Transverse colon (tissue), 4 donors: ENCODE measurements at regions of chr15 and their contacts with region 1.

Region 1: DNA sequence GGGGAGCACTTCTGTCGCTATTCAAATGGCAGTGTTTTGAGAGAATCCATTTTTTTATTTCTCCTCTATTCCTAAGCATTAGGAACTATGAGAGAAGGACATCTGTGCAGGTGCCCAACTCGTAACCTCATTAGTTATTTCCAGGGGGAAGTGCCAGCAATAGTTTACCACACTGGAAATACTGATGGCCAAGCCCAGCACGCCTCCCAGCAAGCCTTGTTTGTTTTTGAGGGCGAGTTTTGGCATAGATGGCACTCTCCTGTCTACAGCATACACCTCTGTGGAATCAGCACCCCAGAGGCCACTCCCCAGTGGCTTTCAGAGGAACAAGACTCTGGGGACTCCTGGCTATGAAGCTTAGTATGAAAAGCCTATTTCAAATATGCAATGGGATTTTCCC is 36.6 kb downstream of the FAN1 start:
- DNase-seq: peak; percentile 40
- H3K4me3 ChIP-seq: no peak overlapping the region
- H3K27ac ChIP-seq: no peak overlapping the region
- H3K4me1 ChIP-seq: no peaks in the 10 kb centered on the region
- H3K27me3 ChIP-seq: no peaks in the 10 kb centered on the region
- CTCF ChIP-seq: no peak
- EP300 ChIP-seq: no peak
- POLR2A ChIP-seq: no peak

Region 2: DNA sequence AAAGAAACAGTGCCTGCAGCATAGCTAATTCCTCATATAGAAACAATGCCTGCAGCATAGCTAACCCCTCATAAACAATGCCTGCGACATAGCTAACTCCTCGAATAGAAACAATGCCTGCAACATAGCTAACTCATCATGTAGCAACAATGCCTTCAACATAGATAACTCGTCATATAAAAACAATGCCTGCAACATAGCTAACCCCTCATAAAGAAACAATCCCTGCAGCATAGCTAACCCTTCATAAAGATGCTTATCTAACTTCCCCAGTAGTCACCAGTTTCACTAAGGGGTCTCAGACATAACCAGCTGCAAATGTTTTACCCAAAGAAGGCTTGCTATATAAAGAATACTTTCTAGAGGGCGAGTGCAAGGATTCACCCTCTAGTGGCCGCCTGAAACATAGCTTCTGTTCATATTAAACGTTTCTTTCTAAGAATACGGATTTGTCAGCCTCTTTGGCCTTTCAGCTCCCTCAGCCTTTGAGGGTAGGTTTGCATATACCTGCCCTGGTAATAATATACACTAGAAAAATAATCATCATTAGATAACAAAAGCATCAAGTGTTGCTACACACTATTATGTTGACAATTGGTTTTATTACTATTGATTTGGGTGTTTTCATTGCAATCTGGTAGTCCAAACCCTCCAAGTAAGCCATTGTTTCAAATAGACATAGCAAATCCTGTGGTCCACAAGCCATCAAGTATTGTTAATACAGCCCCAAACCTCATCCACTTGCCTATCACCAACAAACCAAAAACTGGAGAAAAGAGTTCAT is 81.1 kb before region 1 on chr15:
- in situ Hi-C with region 1: no loop called
- intact Hi-C with region 1: no loop called
- DNase-seq: no peak
- H3K4me3 ChIP-seq: no peak overlapping the region
- H3K27ac ChIP-seq: no peak overlapping the region
- H3K4me1 ChIP-seq: no peaks in the 10 kb centered on the region
- H3K27me3 ChIP-seq: no peaks in the 10 kb centered on the region
- CTCF ChIP-seq: peak; percentile 39 to 71 (median 62)
- EP300 ChIP-seq: no peak
- POLR2A ChIP-seq: no peak

Region 3: DNA sequence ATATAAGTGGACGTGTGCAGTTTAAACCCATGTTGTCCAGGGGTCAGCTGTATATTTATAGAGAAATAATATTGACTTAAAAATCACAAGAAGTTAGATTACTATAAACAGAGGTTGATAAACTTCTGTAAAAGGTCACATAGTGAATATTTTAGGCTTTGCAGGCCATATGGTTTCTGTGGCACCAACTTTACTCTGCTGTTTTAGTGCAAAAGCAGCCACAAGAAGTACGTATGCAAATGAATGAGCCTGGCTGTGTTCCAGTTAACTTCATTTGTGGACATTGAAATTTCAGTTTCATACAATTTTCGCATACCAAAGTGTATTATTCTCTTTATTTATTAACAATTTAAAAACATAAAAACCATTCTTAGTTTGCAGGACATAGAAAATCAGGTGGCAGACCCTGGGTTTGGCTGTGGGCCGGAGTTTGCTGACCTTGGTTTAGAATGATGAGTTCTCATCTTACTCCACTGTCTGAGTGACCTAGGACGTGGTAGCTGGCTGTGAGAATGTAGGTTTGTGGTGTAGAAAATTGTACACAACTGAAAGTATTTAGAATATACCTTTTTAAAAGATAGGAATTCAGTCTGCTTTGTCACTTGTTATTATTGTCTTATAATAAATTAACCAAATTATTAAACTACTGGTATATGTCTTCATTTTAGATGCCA is 20.3 kb before region 1 on chr15:
- in situ Hi-C with region 1: no loop called
- intact Hi-C with region 1: loop called (anchors 1 kb)
- DNase-seq: no peak
- H3K4me3 ChIP-seq: no peak overlapping the region
- H3K27ac ChIP-seq: no peak overlapping the region
- H3K4me1 ChIP-seq: peaks cover 0 to 6% (median 2%) of the 10 kb centered on the region in 4 donors
- H3K27me3 ChIP-seq: no peaks in the 10 kb centered on the region
- CTCF ChIP-seq: no peak
- EP300 ChIP-seq: no peak
- POLR2A ChIP-seq: no peak

Region 4: GRCh38 chr15:31032959-31033358 is 92.6 kb after region 1 on chr15:
- in situ Hi-C with region 1: no loop called
- intact Hi-C with region 1: no loop called
- DNase-seq: no peak
- H3K4me3 ChIP-seq: no peak overlapping the region
- H3K27ac ChIP-seq: no peak overlapping the region
- H3K4me1 ChIP-seq: no peaks in the 10 kb centered on the region
- H3K27me3 ChIP-seq: no peaks in the 10 kb centered on the region
- CTCF ChIP-seq: no peak
- EP300 ChIP-seq: no peak
- POLR2A ChIP-seq: no peak

Region 5: GRCh38 chr15:31081588-31082250 is 141.4 kb after region 1 on chr15:
- in situ Hi-C with region 1: no loop called
- intact Hi-C with region 1: no loop called
- DNase-seq: peak; percentile 26
- H3K4me3 ChIP-seq: no peak overlapping the region
- H3K27ac ChIP-seq: peak overlapping the region in 1 of 4 donors; percentile 6
- H3K4me1 ChIP-seq: peaks cover 4 to 20% (median 18%) of the 10 kb centered on the region in 4 donors
- H3K27me3 ChIP-seq: no peaks in the 10 kb centered on the region
- CTCF ChIP-seq: no peak
- EP300 ChIP-seq: no peak
- POLR2A ChIP-seq: no peak

Region 6: DNA sequence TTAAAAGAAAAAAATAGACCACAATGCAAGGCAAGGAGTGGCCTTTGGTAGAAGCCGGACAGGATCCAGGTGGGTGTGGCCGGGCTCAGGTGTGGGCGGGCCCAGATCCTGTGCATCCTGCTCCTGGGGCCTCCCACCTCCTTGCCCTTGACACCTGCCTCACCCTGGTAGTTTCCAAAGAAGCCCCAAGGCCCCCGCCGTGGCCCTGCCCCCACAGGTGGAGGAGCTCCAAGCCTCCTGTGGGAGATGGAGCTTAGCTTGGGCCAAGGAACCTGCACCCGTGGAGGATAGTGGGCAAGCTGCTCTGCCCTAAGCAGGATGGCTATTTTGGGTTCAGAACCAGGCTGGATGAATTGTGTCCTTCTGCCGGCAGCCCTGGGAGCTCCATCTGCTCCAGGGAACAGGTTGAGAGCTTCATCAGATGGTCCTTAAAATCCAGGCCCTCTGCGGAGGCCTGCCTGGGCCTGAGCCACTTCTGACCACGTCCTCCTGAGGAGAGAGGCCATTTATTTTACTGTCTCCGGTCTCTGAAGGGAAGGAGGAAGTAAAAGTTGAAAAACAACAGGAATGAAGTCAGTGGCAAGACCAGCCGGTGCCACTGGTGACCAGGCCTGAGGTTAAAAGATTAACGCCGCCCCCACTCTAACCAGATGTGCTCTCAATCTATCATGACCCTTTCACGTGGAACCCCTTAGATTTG is 332.3 kb after region 1 on chr15:
- in situ Hi-C with region 1: no loop called
- intact Hi-C with region 1: no loop called
- DNase-seq: peak; percentile 86
- H3K4me3 ChIP-seq: no peak overlapping the region
- H3K27ac ChIP-seq: peak overlapping the region; percentile 41 to 75 (median 68)
- H3K4me1 ChIP-seq: peaks cover 5 to 49% (median 14%) of the 10 kb centered on the region in 4 donors
- H3K27me3 ChIP-seq: no peaks in the 10 kb centered on the region
- CTCF ChIP-seq: no peak
- EP300 ChIP-seq: no peak
- POLR2A ChIP-seq: no peak